Posterior vena cava (tissue), 2 donors: ENCODE measurements at regions of chr1 and their contacts with region 1.

Region 1: DNA sequence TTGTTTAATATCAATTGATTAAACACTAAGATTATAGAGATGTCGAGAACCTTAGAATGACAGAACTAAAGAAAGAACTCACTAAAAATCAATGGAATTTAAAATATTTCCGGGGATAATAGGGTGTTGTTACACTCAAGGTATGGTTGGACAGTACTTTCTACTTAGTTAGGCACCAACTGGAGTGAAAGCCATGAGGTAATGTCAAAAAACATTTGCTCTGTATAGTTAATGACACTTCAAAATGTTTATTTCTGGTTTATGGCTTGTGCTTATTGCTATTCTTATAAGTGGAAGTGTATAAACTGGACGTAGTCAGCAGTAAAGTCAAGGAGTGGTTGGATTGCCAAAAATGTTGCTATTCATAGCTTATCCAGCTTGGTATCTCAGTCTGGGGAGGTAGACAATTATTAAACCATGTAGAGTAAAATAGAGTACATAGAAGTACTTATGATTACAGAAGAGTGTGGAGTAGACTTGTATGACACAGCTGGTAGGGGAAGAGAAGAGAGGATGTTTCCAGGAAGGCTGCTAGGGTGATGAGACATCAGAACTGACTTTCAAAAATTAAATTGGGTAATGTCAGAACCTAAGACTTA is 56.5 kb upstream of the BMP8A start:
- DNase-seq: no peak

Region 2: DNA sequence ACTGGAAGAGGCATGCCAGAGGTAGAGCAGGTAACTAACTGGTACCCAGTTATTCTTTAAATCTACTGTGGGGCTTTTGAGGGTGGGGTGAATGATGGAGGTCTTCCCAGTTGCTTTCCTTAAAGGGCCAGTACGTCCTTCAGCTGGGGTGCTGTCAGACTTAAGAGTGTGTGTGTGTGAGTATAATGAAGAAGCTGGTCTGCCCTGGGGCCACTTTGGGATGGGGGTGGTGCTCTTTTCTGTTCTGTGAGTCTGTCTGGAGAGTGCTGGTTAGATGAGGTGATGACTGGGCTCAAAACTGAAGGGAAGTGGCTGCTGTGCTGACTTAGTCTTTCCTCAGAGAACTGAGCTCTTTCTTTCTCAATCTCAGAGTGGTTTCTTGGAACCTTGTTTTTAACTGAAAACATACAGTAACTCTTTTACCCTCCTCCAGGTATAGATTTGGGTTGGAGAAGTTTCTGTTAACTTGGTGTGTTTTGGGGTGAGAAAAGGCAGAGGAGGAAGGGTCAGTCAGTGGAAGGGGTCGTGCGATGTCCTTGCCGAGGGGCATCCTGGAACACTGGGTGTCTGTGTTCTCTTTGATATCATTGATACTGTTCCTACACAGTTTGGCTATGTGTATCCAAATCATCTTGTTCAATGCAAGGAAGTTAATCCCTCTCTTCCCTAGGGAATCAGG is 229.7 kb before region 1 on chr1:
- intact Hi-C with region 1: no loop called
- DNase-seq: peak; percentile 85

Region 3: DNA sequence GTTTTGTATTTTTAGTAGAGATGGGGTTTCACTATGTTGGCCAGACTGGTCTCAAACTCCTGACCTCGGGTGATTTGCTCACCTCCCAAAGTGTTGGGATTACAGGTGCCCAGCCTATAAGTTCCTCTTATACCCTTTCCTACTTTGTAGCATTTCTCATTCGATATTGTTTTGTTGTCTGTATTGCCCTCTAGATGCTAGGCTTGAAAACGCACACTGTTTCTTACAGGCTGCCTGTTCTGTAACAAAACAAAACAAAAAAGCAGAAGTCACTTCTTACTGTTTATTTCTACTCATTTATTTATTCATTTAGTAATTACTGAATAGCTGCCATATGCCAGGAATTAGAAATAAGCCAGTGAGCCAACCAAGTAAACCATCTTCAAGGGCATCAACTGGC is 80.3 kb before region 1 on chr1:
- intact Hi-C with region 1: loop called in 1 of 2 experiments (anchors 10 kb)
- DNase-seq: no peak

Region 4: DNA sequence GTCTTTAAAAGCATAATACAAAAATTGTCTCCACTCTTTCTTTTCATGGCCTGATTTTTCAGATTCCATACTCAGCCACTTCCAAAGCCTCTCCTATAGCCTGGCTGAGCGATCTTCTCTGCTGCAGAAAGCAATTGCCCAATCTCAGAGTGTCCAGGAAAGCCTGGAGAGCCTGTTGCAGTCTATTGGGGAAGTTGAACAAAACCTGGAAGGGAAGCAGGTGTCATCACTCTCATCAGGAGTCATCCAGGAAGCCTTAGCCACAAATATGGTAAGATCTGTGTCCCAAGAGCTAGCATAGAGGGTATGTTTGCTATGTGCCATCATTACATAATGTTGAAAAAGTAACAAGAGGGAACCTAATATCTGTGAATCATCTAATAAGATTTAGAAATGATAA is 74.2 kb before region 1 on chr1:
- intact Hi-C with region 1: loop called (anchors 10 kb)
- DNase-seq: no peak

Region 5: DNA sequence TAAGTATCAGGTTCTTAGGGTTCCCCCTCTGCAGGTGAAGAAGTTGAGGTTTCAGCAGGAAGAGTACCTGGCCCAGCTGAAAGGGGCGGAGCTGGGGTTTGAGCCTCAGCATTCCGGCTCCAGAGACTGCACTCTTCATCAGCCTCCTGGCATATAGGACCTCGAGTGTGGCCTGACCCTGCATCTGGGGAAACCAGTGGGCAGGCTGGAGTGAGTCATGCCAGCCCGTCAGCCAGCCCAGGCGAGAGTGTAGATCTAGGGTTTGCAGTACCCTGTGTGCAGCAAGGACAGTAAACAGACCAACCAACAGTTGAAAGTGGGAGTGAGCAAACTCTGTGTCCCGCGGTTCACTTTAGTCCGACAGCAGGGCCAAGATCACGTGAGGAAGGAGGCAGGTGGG is 534.2 kb after region 1 on chr1:
- intact Hi-C with region 1: no loop called
- DNase-seq: no peak